Panc1 (cell line): ENCODE measurements at regions of chr11 and their contacts with region 1.

Region 1: GRCh38 chr11:130827451-130828377 is 88.6 kb downstream of the SNX19 start:
- DNase-seq: peak; percentile 27
- ATAC-seq: peak; percentile 95
- H3K4me3 ChIP-seq: no peak overlapping the region
- H3K27ac ChIP-seq: peak overlapping the region; percentile 83
- H3K4me1 ChIP-seq: peaks cover 26% of the 10 kb centered on the region
- H3K27me3 ChIP-seq: no peaks in the 10 kb centered on the region
- CTCF ChIP-seq: peak; percentile 82

Region 2: GRCh38 chr11:130448416-130449309 is 379.1 kb before region 1 on chr11 and contains the start of gene ADAMTS15:
- CTCF ChIA-PET with region 1: interaction called, 13 read pairs
- POLR2A ChIA-PET with region 1: no interaction called
- in situ Hi-C with region 1: no loop called
- intact Hi-C with region 1: no loop called
- DNase-seq: no peak
- ATAC-seq: peak; percentile 95
- H3K4me3 ChIP-seq: peak within 1 kb of the TSS; percentile 73 to 89
- H3K27ac ChIP-seq: peak within 1 kb of the TSS; percentile 67
- H3K4me1 ChIP-seq: peaks cover 16% of the 10 kb centered on the region
- H3K27me3 ChIP-seq: no peaks in the 10 kb centered on the region
- CTCF ChIP-seq: no peak
- total RNA-seq, gene ADAMTS15: 39.9 TPM

Region 3: GRCh38 chr11:130636722-130637517 is 190.8 kb before region 1 on chr11:
- CTCF ChIA-PET with region 1: no interaction called
- POLR2A ChIA-PET with region 1: no interaction called
- in situ Hi-C with region 1: no loop called
- intact Hi-C with region 1: loop called (anchors 5 kb)
- DNase-seq: peak; percentile 97
- ATAC-seq: peak; percentile 91
- H3K4me3 ChIP-seq: peak overlapping the region; percentile 3 to 40; a peak in 3 of 4 replicates
- H3K27ac ChIP-seq: peak overlapping the region; percentile 99
- H3K4me1 ChIP-seq: peaks cover 61% of the 10 kb centered on the region
- H3K27me3 ChIP-seq: no peaks in the 10 kb centered on the region
- CTCF ChIP-seq: no peak

Region 4: DNA sequence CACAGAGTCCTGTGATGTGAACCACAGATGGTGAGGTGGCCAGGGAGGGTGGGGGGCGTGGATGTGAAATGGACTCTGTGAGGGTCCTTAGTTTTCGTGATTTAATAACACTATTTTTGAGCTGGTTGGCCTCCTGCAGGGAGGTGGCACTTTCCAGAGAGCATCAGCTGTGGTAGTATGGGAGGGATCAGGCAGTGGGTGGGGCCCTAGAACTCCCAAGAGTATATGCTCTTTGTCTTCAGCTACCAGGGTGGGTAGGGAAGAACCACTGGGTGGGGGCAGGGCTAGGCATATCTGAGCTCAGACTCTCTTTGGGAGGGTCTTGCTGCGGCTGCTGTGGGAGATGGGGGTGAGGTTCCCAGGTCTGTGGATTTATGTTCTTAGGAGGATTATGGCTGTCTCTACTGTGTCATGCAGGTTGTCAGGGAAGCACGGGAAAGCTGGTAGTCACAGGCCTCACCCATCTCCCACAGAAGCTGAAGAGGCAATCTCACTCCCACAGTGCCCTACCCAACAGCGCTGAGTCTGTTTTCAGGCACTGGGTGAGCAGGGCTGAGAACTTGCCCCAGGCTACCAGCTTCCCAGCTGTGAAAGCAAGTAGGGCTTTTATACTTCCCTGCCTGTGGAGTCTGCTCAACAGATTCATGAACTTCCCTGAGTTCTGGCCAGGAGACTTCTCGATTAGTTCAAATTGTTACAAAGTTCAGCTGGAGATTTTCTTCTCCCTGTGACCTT is 136.5 kb after region 1 on chr11:
- CTCF ChIA-PET with region 1: no interaction called
- POLR2A ChIA-PET with region 1: no interaction called
- in situ Hi-C with region 1: no loop called
- intact Hi-C with region 1: no loop called
- DNase-seq: no peak
- ATAC-seq: no peak
- H3K4me3 ChIP-seq: no peak overlapping the region
- H3K27ac ChIP-seq: no peak overlapping the region
- H3K4me1 ChIP-seq: no peaks in the 10 kb centered on the region
- H3K27me3 ChIP-seq: no peaks in the 10 kb centered on the region
- CTCF ChIP-seq: no peak